ENCODE measurements at regions of chr18 and their contacts with region 1.

Region 1: GRCh38 chr18:21472741-21473140 is 127.8 kb downstream of the ESCO1 start:
- DNase-seq: no peak
- H3K4me3 ChIP-seq: no peak overlapping the region
- H3K27ac ChIP-seq: no peak overlapping the region
- H3K4me1 ChIP-seq: no peaks in the 10 kb centered on the region
- CTCF ChIP-seq: no peak

Region 2: DNA sequence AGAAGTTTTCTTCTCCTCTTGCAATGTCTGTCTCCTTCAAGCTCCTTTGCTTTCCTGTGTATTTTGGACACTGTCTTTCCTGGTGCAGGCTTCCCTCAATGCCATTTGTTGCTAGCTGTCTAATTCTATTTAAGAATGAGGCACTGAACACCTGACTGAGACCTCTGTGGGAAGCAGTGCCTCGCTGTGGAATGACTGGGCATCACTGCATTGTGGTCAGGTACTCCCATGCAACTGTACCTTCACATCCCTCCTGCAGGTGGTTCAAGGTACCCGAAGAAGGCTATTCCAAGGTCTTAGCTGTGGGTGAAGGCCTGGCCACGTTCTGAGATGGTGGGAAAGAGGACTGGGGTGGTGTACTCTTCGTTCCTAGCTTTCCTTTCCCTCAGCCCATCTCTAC is 1097.8 kb after region 1 on chr18:
- CTCF ChIA-PET with region 1: no interaction called
- POLR2A ChIA-PET with region 1: interaction called, 13 read pairs
- intact Hi-C with region 1: no loop called
- DNase-seq: no peak
- H3K4me3 ChIP-seq: no peak overlapping the region
- H3K27ac ChIP-seq: no peak overlapping the region
- H3K4me1 ChIP-seq: no peaks in the 10 kb centered on the region
- CTCF ChIP-seq: no peak